Breast epithelium (tissue), 4 donors: ENCODE measurements at regions of chr9 and their contacts with region 1.

Region 1: GRCh38 chr9:135370411-135371375 is 108.9 kb upstream of the PPP1R26 start:
- DNase-seq: no peak
- H3K4me3 ChIP-seq: no peak overlapping the region
- H3K27ac ChIP-seq: no peak overlapping the region
- H3K4me1 ChIP-seq: no peaks in the 10 kb centered on the region
- H3K27me3 ChIP-seq: peaks cover 3 to 50% of the 10 kb centered on the region in 2 donors
- CTCF ChIP-seq: no peak
- POLR2A ChIP-seq: no peak

Region 2: GRCh38 chr9:135416664-135417290 is 46.1 kb after region 1 on chr9:
- intact Hi-C with region 1: loop called (anchors 2 kb)
- DNase-seq: peak in 1 of 2 donors; percentile 15
- H3K4me3 ChIP-seq: no peak overlapping the region
- H3K27ac ChIP-seq: no peak overlapping the region
- H3K4me1 ChIP-seq: no peaks in the 10 kb centered on the region
- H3K27me3 ChIP-seq: peaks cover 0 to 4% of the 10 kb centered on the region in 2 donors
- CTCF ChIP-seq: no peak
- POLR2A ChIP-seq: no peak